ENCODE measurements at regions of chr1 and their contacts with region 1.

Region 1: DNA sequence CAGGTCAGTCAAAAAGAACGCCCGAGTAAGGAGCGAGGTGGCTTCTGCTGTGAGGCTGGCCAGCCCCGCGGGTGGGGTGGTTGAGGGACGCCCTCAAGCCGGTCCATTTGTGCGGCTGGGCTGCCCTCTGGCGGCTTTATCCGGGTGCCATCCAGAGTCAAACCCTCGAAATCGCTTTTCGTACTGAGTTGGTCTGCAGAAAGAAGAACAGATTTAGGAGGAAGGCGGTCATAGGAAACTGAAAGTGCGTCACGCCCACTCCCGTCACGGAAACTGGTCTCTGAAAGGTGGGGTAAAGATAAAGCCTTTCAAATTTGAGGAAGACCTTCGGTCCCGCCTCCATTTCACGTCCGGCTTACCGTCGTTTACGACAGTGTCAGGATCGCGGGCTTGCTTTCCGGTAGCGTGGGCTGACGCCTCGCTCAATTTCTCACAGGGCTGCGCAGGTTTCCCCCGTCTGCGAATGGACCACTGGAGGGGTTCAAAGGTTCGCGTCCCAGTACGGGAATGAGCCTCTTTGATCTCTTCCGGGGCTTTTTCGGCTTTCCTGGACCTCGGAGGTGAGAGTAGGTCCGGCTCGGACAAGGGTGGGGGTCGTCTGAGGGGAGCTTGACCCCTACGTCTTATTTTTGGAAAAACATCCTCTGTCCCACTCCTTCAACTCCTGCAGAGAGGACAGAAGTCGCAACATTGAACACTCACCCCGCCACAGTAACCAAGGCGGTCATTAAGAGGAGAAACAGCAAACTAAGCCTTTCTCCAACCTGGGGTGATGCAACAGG is at the start of gene HAX1:
- DNase-seq: peak; percentile 98
- H3K4me3 Mint-ChIP-seq: peak within 1 kb of the TSS; percentile 91
- H3K27ac Mint-ChIP-seq: peak within 1 kb of the TSS; percentile 96
- H3K4me1 Mint-ChIP-seq: peaks cover 29% of the 10 kb centered on the region
- H3K27me3 Mint-ChIP-seq: no peaks in the 10 kb centered on the region
- CTCF ChIP-seq: peak; percentile 96
- total RNA-seq, gene HAX1: 261 and 295 TPM in 2 replicates

Region 2: GRCh38 chr1:153796791-153797659 is 475.4 kb before region 1 on chr1:
- CTCF ChIA-PET with region 1: no interaction called
- POLR2A ChIA-PET with region 1: no interaction called
- intact Hi-C with region 1: loop called (anchors 5 kb)
- DNase-seq: peak; percentile 88
- H3K4me3 Mint-ChIP-seq: no peak overlapping the region
- H3K27ac Mint-ChIP-seq: no peak overlapping the region
- H3K4me1 Mint-ChIP-seq: peaks cover 15% of the 10 kb centered on the region
- H3K27me3 Mint-ChIP-seq: no peaks in the 10 kb centered on the region
- CTCF ChIP-seq: peak; percentile 93

Region 3: DNA sequence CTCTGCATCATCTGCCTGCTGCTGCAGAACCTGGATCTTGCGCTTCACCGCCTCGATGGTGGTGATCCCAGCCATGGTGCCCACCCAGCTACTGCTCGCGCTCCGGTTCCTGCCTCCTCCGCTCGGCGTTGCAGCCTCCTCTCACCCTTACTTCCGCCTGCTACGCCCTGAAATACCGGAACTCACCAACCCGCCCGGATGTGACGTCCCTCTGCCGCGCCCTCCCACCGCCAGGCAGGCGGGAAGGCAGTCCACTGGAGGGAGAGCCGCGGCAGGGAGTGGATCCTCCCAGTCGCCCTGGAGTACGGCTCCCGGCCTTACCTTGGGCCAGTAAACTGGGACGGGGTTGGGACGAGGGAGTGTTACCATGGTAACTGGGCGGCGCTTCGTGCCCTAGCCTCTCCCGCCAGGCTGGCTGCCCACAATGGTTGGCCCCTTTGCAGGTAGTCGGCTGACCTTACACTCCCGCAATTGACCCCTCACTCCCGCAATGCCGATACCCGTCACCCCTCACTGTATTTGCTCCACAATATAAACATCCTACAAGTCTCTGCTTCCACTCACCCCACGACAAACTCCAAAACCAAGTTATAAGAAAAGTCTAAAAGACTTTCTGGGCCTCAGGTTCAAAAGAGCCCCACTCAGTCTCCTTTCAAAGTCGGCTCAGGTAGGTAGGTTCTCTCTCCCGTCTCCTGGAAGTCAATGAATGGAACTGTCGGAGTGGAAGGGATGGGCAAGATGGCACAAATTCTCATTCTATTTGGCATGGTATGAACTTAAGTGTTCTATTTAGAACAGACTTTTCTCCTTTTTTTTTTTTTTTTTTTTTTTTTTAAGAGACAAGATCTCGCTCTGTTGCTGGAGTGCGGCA is 89.1 kb before region 1 on chr1:
- CTCF ChIA-PET with region 1: interaction called, 9 read pairs
- POLR2A ChIA-PET with region 1: interaction called, 6 read pairs
- intact Hi-C with region 1: loop called (anchors 1 kb)
- DNase-seq: peak; percentile 99
- H3K4me3 Mint-ChIP-seq: peak overlapping the region; percentile 92
- H3K27ac Mint-ChIP-seq: peak overlapping the region; percentile 96
- H3K4me1 Mint-ChIP-seq: peaks cover 27% of the 10 kb centered on the region
- H3K27me3 Mint-ChIP-seq: no peaks in the 10 kb centered on the region
- CTCF ChIP-seq: no peak

Region 4: GRCh38 chr1:154220071-154220969 is 52.1 kb before region 1 on chr1 and contains the start of gene UBAP2L:
- CTCF ChIA-PET with region 1: interaction called, 6 read pairs
- POLR2A ChIA-PET with region 1: interaction called, 21 read pairs
- intact Hi-C with region 1: loop called (anchors 1 kb)
- DNase-seq: peak; percentile 100
- H3K4me3 Mint-ChIP-seq: peak within 1 kb of the TSS; percentile 92
- H3K27ac Mint-ChIP-seq: peak within 1 kb of the TSS; percentile 99
- H3K4me1 Mint-ChIP-seq: peaks cover 49% of the 10 kb centered on the region
- H3K27me3 Mint-ChIP-seq: no peaks in the 10 kb centered on the region
- CTCF ChIP-seq: no peak
- total RNA-seq, gene UBAP2L: 219 and 223 TPM in 2 replicates

Region 5: DNA sequence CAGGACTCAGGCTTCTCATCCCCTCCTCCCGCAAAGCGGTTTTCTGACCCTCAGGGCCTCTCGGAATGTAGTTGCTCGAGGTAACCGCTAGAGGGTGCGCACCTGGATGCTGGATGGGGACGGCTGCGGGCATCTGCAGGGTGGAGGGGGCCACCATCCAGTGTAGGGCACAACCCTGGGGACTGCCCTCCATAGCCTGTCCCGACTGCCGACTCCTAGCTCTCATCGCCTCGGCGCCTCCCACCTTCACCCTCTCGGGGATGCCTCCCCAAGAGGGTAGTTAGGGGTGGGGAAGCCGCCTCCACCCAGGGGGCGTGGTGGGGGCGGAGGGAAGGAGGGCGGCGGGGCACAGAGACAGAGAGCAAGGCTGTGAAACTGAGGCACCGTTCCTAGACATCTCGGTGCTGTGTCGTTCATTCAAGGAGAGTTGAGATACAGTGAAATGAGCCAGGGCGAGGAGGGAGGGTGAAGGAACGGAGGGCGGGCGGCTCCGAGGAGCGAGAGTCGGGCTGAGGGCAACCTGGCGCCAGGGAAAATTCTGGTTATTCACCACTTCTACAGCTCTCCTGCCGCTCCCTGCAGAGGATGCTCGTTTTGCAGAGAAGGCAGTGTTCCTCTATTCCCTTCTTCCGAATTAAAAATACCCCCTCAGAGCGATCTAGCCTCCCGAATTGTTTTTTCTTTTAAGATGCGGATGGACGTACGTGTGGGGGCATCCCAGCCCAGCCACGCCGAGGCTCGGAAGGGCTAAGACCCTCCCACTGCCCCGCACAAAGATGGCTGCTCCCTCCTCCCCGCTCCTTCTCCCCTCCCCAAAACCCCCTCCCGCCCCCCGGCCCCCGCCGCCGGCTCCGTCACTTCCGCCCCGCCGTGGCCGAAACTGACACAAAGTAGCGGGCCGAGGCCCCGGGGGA is 52.5 kb after region 1 on chr1 and contains the start of gene ATP8B2:
- CTCF ChIA-PET with region 1: interaction called, 4 read pairs
- POLR2A ChIA-PET with region 1: interaction called, 4 read pairs
- intact Hi-C with region 1: loop called (anchors 2 kb)
- DNase-seq: peak; percentile 85
- H3K4me3 Mint-ChIP-seq: peak within 1 kb of the TSS; percentile 76
- H3K27ac Mint-ChIP-seq: peak within 1 kb of the TSS; percentile 77
- H3K4me1 Mint-ChIP-seq: peaks cover 31% of the 10 kb centered on the region
- H3K27me3 Mint-ChIP-seq: no peaks in the 10 kb centered on the region
- CTCF ChIP-seq: peak; percentile 99
- total RNA-seq, gene ATP8B2: 27.1 and 66.3 TPM in 2 replicates

Region 6: DNA sequence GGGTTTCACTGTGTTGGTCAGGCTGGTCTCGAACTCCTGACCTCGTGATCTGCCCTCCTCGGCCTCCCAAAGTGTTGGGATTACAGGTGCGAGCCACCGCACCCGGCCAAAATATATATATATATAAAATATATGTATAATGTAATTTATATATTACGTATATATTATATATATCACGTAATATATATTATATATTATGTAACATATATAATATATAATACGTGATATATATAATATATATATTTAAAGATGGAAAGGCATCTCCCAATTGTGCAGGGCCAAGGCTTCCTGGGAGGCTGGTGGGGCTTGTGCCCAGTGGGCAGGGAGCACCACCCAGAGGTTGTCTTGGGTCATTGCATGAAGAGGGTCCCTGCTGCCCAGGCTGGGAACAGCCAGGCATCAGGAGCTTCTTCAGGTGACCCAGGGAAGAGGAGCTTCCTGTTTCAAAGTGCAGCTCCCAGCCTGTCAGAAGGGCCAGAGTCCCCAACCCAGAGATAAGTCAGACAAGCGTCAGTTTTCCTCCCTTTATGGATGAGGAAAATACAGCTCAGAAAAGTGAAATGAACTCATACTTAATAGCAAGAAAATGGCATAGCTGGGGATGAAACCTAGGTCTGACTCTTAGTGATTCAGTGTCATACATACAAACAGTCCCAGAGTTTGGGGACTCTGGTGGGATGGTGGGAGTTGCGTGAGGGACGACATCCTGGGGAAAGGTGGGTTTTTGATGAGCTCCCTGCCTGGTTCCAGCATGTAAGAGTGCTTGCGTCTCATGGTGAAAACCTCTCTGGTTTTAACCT is 274.1 kb after region 1 on chr1:
- CTCF ChIA-PET with region 1: interaction called, 5 read pairs
- POLR2A ChIA-PET with region 1: no interaction called
- intact Hi-C with region 1: loop called (anchors 1 kb)
- DNase-seq: peak; percentile 83
- H3K4me3 Mint-ChIP-seq: no peak overlapping the region
- H3K27ac Mint-ChIP-seq: no peak overlapping the region
- H3K4me1 Mint-ChIP-seq: peaks cover 10% of the 10 kb centered on the region
- H3K27me3 Mint-ChIP-seq: peaks cover 30% of the 10 kb centered on the region
- CTCF ChIP-seq: peak; percentile 87